Right cardiac atrium (tissue), 5 donors: ENCODE measurements at regions of chr11 and their contacts with region 1.

Region 1: GRCh38 chr11:31870609-31871309 is 59.6 kb upstream of the PAX6 start:
- DNase-seq: peak; percentile 24 to 57 (median 57)
- ATAC-seq: peak; percentile 41 to 44
- H3K4me3 ChIP-seq: no peak overlapping the region
- H3K27ac ChIP-seq: no peak overlapping the region
- H3K4me1 ChIP-seq: no peaks in the 10 kb centered on the region
- H3K27me3 ChIP-seq: peaks cover 2% of the 10 kb centered on the region

Region 2: GRCh38 chr11:31240338-31240904 is 630.3 kb before region 1 on chr11:
- intact Hi-C with region 1: loop called in 1 of 4 experiments (anchors 10 kb)
- DNase-seq: no peak
- ATAC-seq: peak in 1 of 2 donors; percentile 50
- H3K4me3 ChIP-seq: no peak overlapping the region
- H3K27ac ChIP-seq: no peak overlapping the region
- H3K4me1 ChIP-seq: no peaks in the 10 kb centered on the region
- H3K27me3 ChIP-seq: no peaks in the 10 kb centered on the region

Region 3: GRCh38 chr11:31397239-31397834 is 473.4 kb before region 1 on chr11:
- intact Hi-C with region 1: loop called in 2 of 4 experiments (anchors 5 to 10 kb)
- DNase-seq: no peak
- ATAC-seq: no peak
- H3K4me3 ChIP-seq: no peak overlapping the region
- H3K27ac ChIP-seq: no peak overlapping the region
- H3K4me1 ChIP-seq: no peaks in the 10 kb centered on the region
- H3K27me3 ChIP-seq: no peaks in the 10 kb centered on the region

Region 4: GRCh38 chr11:31487848-31488247 is 382.9 kb before region 1 on chr11:
- intact Hi-C with region 1: loop called in 1 of 4 experiments (anchors 10 kb)
- DNase-seq: no peak
- ATAC-seq: no peak
- H3K4me3 ChIP-seq: no peak overlapping the region
- H3K27ac ChIP-seq: no peak overlapping the region
- H3K4me1 ChIP-seq: no peaks in the 10 kb centered on the region
- H3K27me3 ChIP-seq: no peaks in the 10 kb centered on the region

Region 5: GRCh38 chr11:31714840-31715239 is 155.9 kb before region 1 on chr11:
- intact Hi-C with region 1: no loop called
- DNase-seq: no peak
- ATAC-seq: no peak
- H3K4me3 ChIP-seq: no peak overlapping the region
- H3K27ac ChIP-seq: no peak overlapping the region
- H3K4me1 ChIP-seq: no peaks in the 10 kb centered on the region
- H3K27me3 ChIP-seq: no peaks in the 10 kb centered on the region